B cell (primary cell): ENCODE measurements at regions of chr17 and their contacts with region 1.

Region 1: GRCh38 chr17:73429440-73430164 is 117.8 kb upstream of the CDC42EP4 start:
- DNase-seq: peak; percentile 84
- ATAC-seq: peak; percentile 88
- H3K4me3 ChIP-seq: no peak overlapping the region
- H3K4me3 Mint-ChIP-seq: no peak overlapping the region
- H3K27ac ChIP-seq: no peak overlapping the region
- H3K27ac Mint-ChIP-seq: peak overlapping the region; percentile 20
- H3K4me1 ChIP-seq: peaks cover 0 to 8% of the 10 kb centered on the region in 2 donors
- H3K4me1 Mint-ChIP-seq: peaks cover 11% of the 10 kb centered on the region
- H3K27me3 ChIP-seq: no peaks in the 10 kb centered on the region
- H3K27me3 Mint-ChIP-seq: peaks cover 3% of the 10 kb centered on the region
- CTCF ChIP-seq: peak; percentile 99

Region 2: DNA sequence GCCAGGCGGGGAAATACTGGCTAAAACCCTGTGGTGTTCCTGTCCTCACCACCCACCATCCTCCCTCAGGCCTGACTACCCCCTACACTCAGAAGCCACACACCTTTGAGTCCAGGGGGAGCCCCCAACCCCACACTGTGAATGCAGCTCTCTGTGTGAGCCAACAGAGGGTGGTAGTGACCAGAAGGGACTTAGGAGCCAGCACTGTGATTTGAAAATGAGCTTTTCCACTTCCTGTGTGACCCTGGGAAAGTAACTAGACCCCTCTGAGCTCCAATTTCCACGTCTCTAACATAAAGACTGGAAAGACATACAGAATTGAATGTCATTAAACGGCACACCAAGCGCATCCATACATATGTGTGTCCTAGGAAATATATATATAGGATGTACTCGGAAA is 156.0 kb after region 1 on chr17:
- CTCF ChIA-PET with region 1: interaction called, 21 read pairs
- POLR2A ChIA-PET with region 1: no interaction called
- intact Hi-C with region 1: no loop called
- DNase-seq: no peak
- ATAC-seq: peak; percentile 52
- H3K4me3 ChIP-seq: no peak overlapping the region
- H3K4me3 Mint-ChIP-seq: no peak overlapping the region
- H3K27ac ChIP-seq: no peak overlapping the region
- H3K27ac Mint-ChIP-seq: peak overlapping the region; percentile 41
- H3K4me1 ChIP-seq: peaks cover 55 to 60% of the 10 kb centered on the region in 2 donors
- H3K4me1 Mint-ChIP-seq: peaks cover 70% of the 10 kb centered on the region
- H3K27me3 ChIP-seq: no peaks in the 10 kb centered on the region
- H3K27me3 Mint-ChIP-seq: no peaks in the 10 kb centered on the region
- CTCF ChIP-seq: peak; percentile 20

Region 3: GRCh38 chr17:73645050-73645978 is 215.7 kb after region 1 on chr17:
- CTCF ChIA-PET with region 1: interaction called, 58 read pairs
- POLR2A ChIA-PET with region 1: no interaction called
- intact Hi-C with region 1: loop called (anchors 1 kb)
- DNase-seq: peak; percentile 82
- ATAC-seq: peak; percentile 70
- H3K4me3 ChIP-seq: peak overlapping the region in 3 of 5 experiments; percentile 41 to 72 (median 63)
- H3K4me3 Mint-ChIP-seq: peak overlapping the region; percentile 73
- H3K27ac ChIP-seq: no peak overlapping the region
- H3K27ac Mint-ChIP-seq: peak overlapping the region; percentile 50
- H3K4me1 ChIP-seq: peaks cover 20 to 38% of the 10 kb centered on the region in 2 donors
- H3K4me1 Mint-ChIP-seq: peaks cover 26% of the 10 kb centered on the region
- H3K27me3 ChIP-seq: peaks cover 0 to 23% (median 0%) of the 10 kb centered on the region in 4 experiments
- H3K27me3 Mint-ChIP-seq: peaks cover 4% of the 10 kb centered on the region
- CTCF ChIP-seq: no peak

Region 4: GRCh38 chr17:73710095-73710592 is 280.5 kb after region 1 on chr17:
- CTCF ChIA-PET with region 1: interaction called, 153 read pairs
- POLR2A ChIA-PET with region 1: no interaction called
- intact Hi-C with region 1: no loop called
- DNase-seq: peak; percentile 77
- ATAC-seq: peak; percentile 61
- H3K4me3 ChIP-seq: no peak overlapping the region
- H3K4me3 Mint-ChIP-seq: no peak overlapping the region
- H3K27ac ChIP-seq: no peak overlapping the region
- H3K27ac Mint-ChIP-seq: no peak overlapping the region
- H3K4me1 ChIP-seq: peaks cover 19 to 28% of the 10 kb centered on the region in 2 donors
- H3K4me1 Mint-ChIP-seq: peaks cover 22% of the 10 kb centered on the region
- H3K27me3 ChIP-seq: peaks cover 0 to 11% (median 3%) of the 10 kb centered on the region in 4 experiments
- H3K27me3 Mint-ChIP-seq: peaks cover 17% of the 10 kb centered on the region
- CTCF ChIP-seq: peak; percentile 81

Region 5: GRCh38 chr17:73956669-73957465 is 527.3 kb after region 1 on chr17:
- CTCF ChIA-PET with region 1: interaction called, 31 read pairs
- POLR2A ChIA-PET with region 1: no interaction called
- intact Hi-C with region 1: no loop called
- DNase-seq: peak; percentile 53
- ATAC-seq: peak; percentile 62
- H3K4me3 ChIP-seq: no peak overlapping the region
- H3K4me3 Mint-ChIP-seq: no peak overlapping the region
- H3K27ac ChIP-seq: no peak overlapping the region
- H3K27ac Mint-ChIP-seq: no peak overlapping the region
- H3K4me1 ChIP-seq: peaks cover 11 to 12% of the 10 kb centered on the region in 2 donors
- H3K4me1 Mint-ChIP-seq: peaks cover 3% of the 10 kb centered on the region
- H3K27me3 ChIP-seq: peaks cover 0 to 23% (median 17%) of the 10 kb centered on the region in 4 experiments
- H3K27me3 Mint-ChIP-seq: peaks cover 14% of the 10 kb centered on the region
- CTCF ChIP-seq: peak; percentile 62

Region 6: GRCh38 chr17:73986641-73987177 is 557.1 kb after region 1 on chr17:
- CTCF ChIA-PET with region 1: interaction called, 4 read pairs
- POLR2A ChIA-PET with region 1: interaction called, 13 read pairs
- intact Hi-C with region 1: no loop called
- DNase-seq: no peak
- ATAC-seq: no peak
- H3K4me3 ChIP-seq: no peak overlapping the region
- H3K4me3 Mint-ChIP-seq: no peak overlapping the region
- H3K27ac ChIP-seq: no peak overlapping the region
- H3K27ac Mint-ChIP-seq: no peak overlapping the region
- H3K4me1 ChIP-seq: no peaks in the 10 kb centered on the region
- H3K4me1 Mint-ChIP-seq: peaks cover 2% of the 10 kb centered on the region
- H3K27me3 ChIP-seq: no peaks in the 10 kb centered on the region
- H3K27me3 Mint-ChIP-seq: peaks cover 13% of the 10 kb centered on the region
- CTCF ChIP-seq: no peak

Region 7: GRCh38 chr17:73998653-73999645 is 569.3 kb after region 1 on chr17:
- CTCF ChIA-PET with region 1: interaction called, 29 read pairs
- POLR2A ChIA-PET with region 1: no interaction called
- intact Hi-C with region 1: no loop called
- DNase-seq: peak; percentile 53
- ATAC-seq: peak; percentile 70
- H3K4me3 ChIP-seq: no peak overlapping the region
- H3K4me3 Mint-ChIP-seq: no peak overlapping the region
- H3K27ac ChIP-seq: no peak overlapping the region
- H3K27ac Mint-ChIP-seq: no peak overlapping the region
- H3K4me1 ChIP-seq: no peaks in the 10 kb centered on the region
- H3K4me1 Mint-ChIP-seq: no peaks in the 10 kb centered on the region
- H3K27me3 ChIP-seq: peaks cover 0 to 4% (median 0%) of the 10 kb centered on the region in 4 experiments
- H3K27me3 Mint-ChIP-seq: peaks cover 28% of the 10 kb centered on the region
- CTCF ChIP-seq: peak; percentile 83